ENCODE measurements at regions of chr9 and their contacts with region 1.

Region 1: GRCh38 chr9:108257382-108257781 is 598.4 kb downstream of the ACTL7B start:
- DNase-seq: no peak
- ATAC-seq: no peak
- H3K4me3 ChIP-seq: no peak overlapping the region
- H3K4me3 Mint-ChIP-seq: no peak overlapping the region
- H3K27ac ChIP-seq: no peak overlapping the region
- H3K27ac Mint-ChIP-seq: no peak overlapping the region
- H3K4me1 ChIP-seq: no peaks in the 10 kb centered on the region
- H3K4me1 Mint-ChIP-seq: no peaks in the 10 kb centered on the region
- H3K27me3 ChIP-seq: no peaks in the 10 kb centered on the region
- H3K27me3 Mint-ChIP-seq: no peaks in the 10 kb centered on the region
- CTCF ChIP-seq: no peak

Region 2: DNA sequence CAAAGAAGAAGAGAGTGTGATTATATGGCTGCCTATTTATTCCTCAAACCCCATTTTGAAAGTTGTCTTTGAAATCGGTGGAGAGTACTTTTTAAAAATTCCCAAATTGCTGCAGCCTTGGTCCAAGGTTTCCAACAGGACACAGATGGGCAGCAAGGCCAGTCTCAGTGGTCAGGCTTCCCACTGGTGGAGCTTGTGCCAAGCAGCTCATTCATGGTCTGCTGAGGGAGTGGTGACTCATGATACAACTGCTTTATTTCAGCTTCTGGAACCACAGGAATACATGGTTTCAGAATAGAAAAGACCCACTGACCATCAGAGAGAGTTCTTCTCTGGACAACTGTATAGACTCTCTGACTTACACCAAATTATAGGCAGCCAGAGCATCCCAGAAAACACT is 94.7 kb before region 1 on chr9:
- intact Hi-C with region 1: no loop called
- DNase-seq: no peak
- ATAC-seq: no peak
- H3K4me3 ChIP-seq: no peak overlapping the region
- H3K4me3 Mint-ChIP-seq: no peak overlapping the region
- H3K27ac ChIP-seq: no peak overlapping the region
- H3K27ac Mint-ChIP-seq: no peak overlapping the region
- H3K4me1 ChIP-seq: no peaks in the 10 kb centered on the region
- H3K4me1 Mint-ChIP-seq: no peaks in the 10 kb centered on the region
- H3K27me3 ChIP-seq: no peaks in the 10 kb centered on the region
- H3K27me3 Mint-ChIP-seq: no peaks in the 10 kb centered on the region
- CTCF ChIP-seq: no peak

Region 3: DNA sequence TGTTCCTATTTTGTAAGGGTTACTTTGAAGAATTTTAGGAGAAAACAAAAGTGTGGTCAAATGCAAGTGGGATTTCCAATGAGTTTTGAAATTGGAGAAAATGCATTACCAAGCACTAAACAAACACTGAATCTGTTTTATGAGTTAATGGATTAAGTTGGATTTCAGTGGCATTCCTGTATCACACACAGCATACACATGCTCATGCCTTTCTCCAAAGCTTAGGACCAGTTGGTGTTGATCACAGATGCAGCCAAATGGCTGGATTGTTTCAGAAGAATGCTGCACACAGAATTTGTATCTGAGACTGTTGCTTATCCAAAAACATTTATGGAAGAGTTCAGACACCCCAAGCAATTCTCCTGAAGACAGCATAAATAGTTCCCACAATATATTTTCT is 12.7 kb before region 1 on chr9:
- intact Hi-C with region 1: loop called (anchors 1 kb)
- DNase-seq: no peak
- ATAC-seq: no peak
- H3K4me3 ChIP-seq: no peak overlapping the region
- H3K4me3 Mint-ChIP-seq: no peak overlapping the region
- H3K27ac ChIP-seq: no peak overlapping the region
- H3K27ac Mint-ChIP-seq: no peak overlapping the region
- H3K4me1 ChIP-seq: no peaks in the 10 kb centered on the region
- H3K4me1 Mint-ChIP-seq: no peaks in the 10 kb centered on the region
- H3K27me3 ChIP-seq: no peaks in the 10 kb centered on the region
- H3K27me3 Mint-ChIP-seq: no peaks in the 10 kb centered on the region
- CTCF ChIP-seq: no peak